ENCODE measurements at regions of chr17 and their contacts with region 1.

Region 1: GRCh38 chr17:64741038-64741641 is 79.0 kb upstream of the SMURF2 start:
- DNase-seq: no peak
- H3K4me3 ChIP-seq: no peak overlapping the region
- H3K27ac ChIP-seq: no peak overlapping the region
- H3K4me1 ChIP-seq: peaks cover 20% of the 10 kb centered on the region
- H3K27me3 ChIP-seq: no peaks in the 10 kb centered on the region
- CTCF ChIP-seq: no peak

Region 2: GRCh38 chr17:64622931-64623654 is 118.0 kb before region 1 on chr17:
- dilution Hi-C with region 1: no loop called
- DNase-seq: peak; percentile 64
- H3K4me3 ChIP-seq: peak overlapping the region in 1 of 3 experiments; percentile 5
- H3K27ac ChIP-seq: peak overlapping the region; percentile 31
- H3K4me1 ChIP-seq: peaks cover 50% of the 10 kb centered on the region
- H3K27me3 ChIP-seq: no peaks in the 10 kb centered on the region
- CTCF ChIP-seq: no peak

Region 3: GRCh38 chr17:64658931-64659330 is 82.2 kb before region 1 on chr17:
- dilution Hi-C with region 1: loop called (anchors 10 kb)
- DNase-seq: no peak
- H3K4me3 ChIP-seq: peak overlapping the region; percentile 31 to 95 (median 55)
- H3K27ac ChIP-seq: peak overlapping the region; percentile 36
- H3K4me1 ChIP-seq: peaks cover 22% of the 10 kb centered on the region
- H3K27me3 ChIP-seq: no peaks in the 10 kb centered on the region
- CTCF ChIP-seq: no peak

Measured in keratinocyte (primary cell).